ENCODE measurements at regions of chr1 and their contacts with region 1.

Region 1: GRCh38 chr1:37682334-37682987 is 9.9 kb upstream of the CDCA8 start:
- DNase-seq: peak; percentile 86
- ATAC-seq: peak; percentile 61
- H3K4me3 Mint-ChIP-seq: no peak overlapping the region
- H3K27ac Mint-ChIP-seq: no peak overlapping the region
- H3K4me1 Mint-ChIP-seq: peaks cover 3% of the 10 kb centered on the region
- H3K27me3 Mint-ChIP-seq: peaks cover 18% of the 10 kb centered on the region

Region 2: DNA sequence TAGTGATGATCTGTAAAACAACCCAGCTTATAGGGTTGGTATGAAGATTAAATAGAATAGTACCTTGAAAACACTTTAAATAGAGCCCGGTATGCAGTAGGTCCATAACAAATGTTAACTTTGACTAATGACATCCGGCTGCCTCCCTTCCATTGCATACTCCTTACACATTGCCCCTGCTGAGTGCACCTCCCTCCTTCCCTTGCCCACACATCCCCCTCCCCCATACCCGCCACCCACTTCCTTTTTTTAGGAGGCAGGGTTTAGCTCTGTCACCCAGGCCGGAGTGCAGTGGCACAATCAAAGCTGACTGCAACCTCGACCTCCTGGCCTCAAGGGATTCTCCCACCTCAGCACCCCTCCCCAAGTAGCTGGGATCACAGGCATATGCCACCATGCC is 232.5 kb before region 1 on chr1:
- CTCF ChIA-PET with region 1: interaction called, 28 read pairs
- POLR2A ChIA-PET with region 1: no interaction called
- DNase-seq: peak; percentile 53
- ATAC-seq: no peak
- H3K4me3 Mint-ChIP-seq: no peak overlapping the region
- H3K27ac Mint-ChIP-seq: peak overlapping the region; percentile 60
- H3K4me1 Mint-ChIP-seq: peaks cover 15% of the 10 kb centered on the region
- H3K27me3 Mint-ChIP-seq: peaks cover 5% of the 10 kb centered on the region

Region 3: DNA sequence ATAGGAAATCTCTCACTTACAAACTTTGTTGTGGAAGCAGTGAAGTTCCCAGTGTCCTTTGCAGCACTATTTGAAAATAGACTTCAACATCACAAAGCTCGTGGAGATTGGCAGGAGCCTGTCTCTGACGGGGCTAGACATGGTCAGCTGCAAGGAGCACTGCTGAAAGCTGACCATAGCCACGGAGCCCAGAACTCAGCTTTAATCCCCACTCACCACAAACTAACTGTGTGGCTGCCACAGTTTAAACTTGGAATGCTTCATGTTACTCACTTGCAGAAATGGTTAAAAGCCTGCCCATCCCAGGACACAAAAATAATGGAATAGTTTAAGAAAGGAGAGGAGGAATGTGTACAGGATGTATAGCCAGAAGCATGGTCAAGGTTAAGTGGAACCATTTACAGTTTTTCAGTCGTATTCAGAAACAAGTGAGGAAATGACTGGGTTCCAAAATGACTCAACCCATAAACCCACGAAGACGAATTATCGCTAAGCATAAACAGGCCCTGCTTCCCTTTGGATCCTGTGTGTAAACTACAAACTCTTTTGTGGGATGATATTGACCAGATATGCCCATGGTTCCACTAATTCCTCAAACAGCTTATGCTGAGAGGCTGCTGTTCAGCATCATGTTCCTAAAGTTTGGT is 107.5 kb before region 1 on chr1:
- CTCF ChIA-PET with region 1: interaction called, 10 read pairs
- POLR2A ChIA-PET with region 1: interaction called, 4 read pairs
- DNase-seq: no peak
- ATAC-seq: peak; percentile 42
- H3K4me3 Mint-ChIP-seq: peak overlapping the region; percentile 1
- H3K27ac Mint-ChIP-seq: no peak overlapping the region
- H3K4me1 Mint-ChIP-seq: peaks cover 57% of the 10 kb centered on the region
- H3K27me3 Mint-ChIP-seq: no peaks in the 10 kb centered on the region

Region 4: DNA sequence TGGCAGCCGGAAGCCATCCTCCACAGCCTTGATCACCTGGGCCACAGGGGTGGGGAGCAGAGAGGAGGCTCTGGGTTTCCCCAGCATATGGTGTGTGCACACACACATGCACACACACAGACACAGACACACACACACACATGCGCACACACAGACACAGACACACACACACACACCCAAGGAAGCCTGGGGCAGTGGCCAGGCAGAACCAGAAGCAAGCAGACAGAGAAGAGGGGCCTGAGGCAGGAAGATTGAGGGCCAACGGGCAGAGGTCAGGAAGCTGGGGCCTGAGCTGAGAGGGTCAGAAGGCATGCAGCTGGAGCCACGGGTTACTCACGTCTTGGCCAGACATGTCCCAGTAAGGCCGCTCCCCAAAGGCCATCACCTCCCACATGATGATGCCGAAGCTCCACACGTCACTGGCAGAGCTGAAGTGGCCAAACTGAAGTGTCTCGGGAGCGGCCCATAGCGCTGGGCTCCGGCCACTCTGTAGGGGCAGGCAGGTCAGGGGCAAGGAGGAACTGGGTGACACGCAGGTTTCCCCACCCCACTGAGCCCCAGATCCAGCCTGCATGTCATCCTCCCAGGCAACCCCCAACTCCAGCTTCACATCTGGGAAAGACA is 37.2 kb after region 1 on chr1:
- CTCF ChIA-PET with region 1: no interaction called
- POLR2A ChIA-PET with region 1: no interaction called
- DNase-seq: no peak
- ATAC-seq: no peak
- H3K4me3 Mint-ChIP-seq: no peak overlapping the region
- H3K27ac Mint-ChIP-seq: no peak overlapping the region
- H3K4me1 Mint-ChIP-seq: no peaks in the 10 kb centered on the region
- H3K27me3 Mint-ChIP-seq: peaks cover 5% of the 10 kb centered on the region

Measured in activated CD8-positive, alpha-beta T cell treated with anti-CD3 and anti-CD28 coated beads, Interleukin-2, amount 10 ng/mL, durations not matched to agents 7 days and 5 days (primary cell).